GM10248 (cell line): ENCODE measurements at regions of chr6 and their contacts with region 1.

Region 1: GRCh38 chr6:33075568-33076405 is at the start of gene HLA-DPB1:
- DNase-seq: peak; percentile 86
- CTCF ChIP-seq: no peak

Region 2: GRCh38 chr6:32832535-32832934 is 243.3 kb before region 1 on chr6:
- CTCF ChIA-PET with region 1: no interaction called
- POLR2A ChIA-PET with region 1: no interaction called
- DNase-seq: no peak
- CTCF ChIP-seq: no peak

Region 3: GRCh38 chr6:33029328-33030184 is 46.2 kb before region 1 on chr6:
- CTCF ChIA-PET with region 1: interaction called, 9 read pairs
- POLR2A ChIA-PET with region 1: interaction called, 17 read pairs
- DNase-seq: peak; percentile 64
- CTCF ChIP-seq: peak; percentile 19

Region 4: GRCh38 chr6:33057222-33058150 is 18.3 kb before region 1 on chr6:
- CTCF ChIA-PET with region 1: interaction called, 10 read pairs
- POLR2A ChIA-PET with region 1: interaction called, 7 read pairs
- DNase-seq: no peak
- CTCF ChIP-seq: no peak

Region 5: GRCh38 chr6:33112148-33112547 is 36.4 kb after region 1 on chr6:
- CTCF ChIA-PET with region 1: interaction called, 3 read pairs
- POLR2A ChIA-PET with region 1: interaction called, 10 read pairs
- DNase-seq: peak; percentile 83
- CTCF ChIP-seq: no peak

Region 6: DNA sequence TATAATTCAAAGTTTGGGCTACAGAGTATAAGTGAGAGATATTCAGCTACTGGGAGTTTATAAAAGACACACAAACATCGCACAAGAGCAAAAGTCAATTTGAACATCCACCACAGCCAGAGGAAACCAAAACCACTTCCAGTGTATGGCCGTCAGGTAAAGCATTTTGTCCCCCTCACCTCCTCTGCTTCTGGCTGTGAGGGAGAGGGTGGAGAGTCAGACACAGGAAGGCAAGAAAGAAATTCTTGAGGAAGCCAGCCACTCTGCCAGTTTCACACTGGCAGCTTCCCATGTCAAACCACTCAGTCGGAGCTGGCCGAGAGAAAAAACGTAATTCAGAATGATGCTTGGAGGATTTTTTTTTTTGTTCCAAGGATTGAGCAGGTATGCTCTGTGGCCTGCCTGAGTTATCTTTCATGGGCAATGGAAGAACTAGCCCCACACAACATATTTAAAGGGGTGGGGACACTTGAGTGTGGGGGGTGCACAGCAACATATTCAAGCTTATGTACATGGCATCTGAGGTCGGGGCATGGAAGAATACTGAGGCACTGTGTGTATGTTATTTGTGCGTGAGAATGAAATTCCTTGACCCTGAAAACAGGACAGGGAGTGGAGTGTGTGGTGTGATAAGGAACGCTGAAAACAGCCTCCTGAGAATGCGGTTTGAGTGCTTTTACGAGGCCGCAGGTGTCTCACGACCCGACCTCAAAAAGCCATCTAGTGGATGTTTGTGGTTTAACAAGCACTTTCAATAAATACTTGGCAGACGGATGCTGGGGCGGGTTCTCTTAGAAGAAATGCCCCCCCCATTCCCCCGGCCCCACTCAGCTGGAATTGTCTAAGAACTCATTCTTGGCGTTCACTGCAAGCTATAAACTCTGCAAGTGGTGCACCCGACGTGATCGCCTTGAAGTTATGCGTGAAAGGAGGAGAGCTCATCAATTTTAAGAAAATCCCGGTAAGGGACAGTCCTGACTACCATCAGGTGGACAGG is 269.2 kb after region 1 on chr6:
- CTCF ChIA-PET with region 1: no interaction called
- POLR2A ChIA-PET with region 1: no interaction called
- DNase-seq: peak; percentile 72
- CTCF ChIP-seq: peak; percentile 57